ENCODE measurements at regions of chr9 and their contacts with region 1.

Region 1: GRCh38 chr9:132901856-132902831 is 23.4 kb downstream of the SPACA9 start:
- DNase-seq: peak; percentile 88
- H3K4me3 Mint-ChIP-seq: no peak overlapping the region
- H3K27ac Mint-ChIP-seq: no peak overlapping the region
- H3K4me1 Mint-ChIP-seq: no peaks in the 10 kb centered on the region
- H3K27me3 Mint-ChIP-seq: no peaks in the 10 kb centered on the region

Region 2: DNA sequence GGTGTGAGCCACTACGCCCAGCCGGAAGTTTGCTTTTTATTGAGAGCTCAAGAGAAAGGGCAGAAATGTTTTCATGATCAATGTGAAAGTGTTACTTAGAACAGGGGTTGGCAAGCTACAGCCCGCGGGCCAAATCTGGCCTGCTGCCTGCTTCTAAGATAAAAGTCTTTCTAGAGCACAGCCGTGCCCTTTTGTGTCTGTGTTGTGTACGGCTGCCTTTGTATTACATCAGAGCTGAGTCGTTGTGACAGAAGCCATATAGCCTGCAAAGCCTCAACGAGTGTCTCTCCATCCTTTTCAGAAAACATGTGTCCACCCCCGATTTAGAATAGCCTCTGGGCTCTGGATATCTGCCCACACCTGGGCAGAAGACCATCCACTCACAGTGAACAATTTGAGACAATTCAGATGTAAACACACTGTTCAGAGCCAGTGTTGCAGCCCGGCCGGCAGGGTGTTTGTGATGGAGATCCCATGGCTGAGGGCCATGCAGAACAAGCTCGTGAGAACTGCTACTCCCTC is 52.9 kb before region 1 on chr9:
- CTCF ChIA-PET with region 1: interaction called, 18 read pairs
- DNase-seq: peak; percentile 34
- H3K4me3 Mint-ChIP-seq: peak overlapping the region; percentile 38
- H3K27ac Mint-ChIP-seq: peak overlapping the region; percentile 88
- H3K4me1 Mint-ChIP-seq: peaks cover 28% of the 10 kb centered on the region
- H3K27me3 Mint-ChIP-seq: peaks cover 12% of the 10 kb centered on the region

Region 3: GRCh38 chr9:132877824-132878694 is 24.1 kb before region 1 on chr9 and contains the start of gene AK8:
- CTCF ChIA-PET with region 1: interaction called, 15 read pairs
- DNase-seq: peak; percentile 83
- H3K4me3 Mint-ChIP-seq: peak within 1 kb of the TSS; percentile 74
- H3K27ac Mint-ChIP-seq: peak within 1 kb of the TSS; percentile 86
- H3K4me1 Mint-ChIP-seq: peaks cover 24% of the 10 kb centered on the region
- H3K27me3 Mint-ChIP-seq: peaks cover 27% of the 10 kb centered on the region

Region 4: DNA sequence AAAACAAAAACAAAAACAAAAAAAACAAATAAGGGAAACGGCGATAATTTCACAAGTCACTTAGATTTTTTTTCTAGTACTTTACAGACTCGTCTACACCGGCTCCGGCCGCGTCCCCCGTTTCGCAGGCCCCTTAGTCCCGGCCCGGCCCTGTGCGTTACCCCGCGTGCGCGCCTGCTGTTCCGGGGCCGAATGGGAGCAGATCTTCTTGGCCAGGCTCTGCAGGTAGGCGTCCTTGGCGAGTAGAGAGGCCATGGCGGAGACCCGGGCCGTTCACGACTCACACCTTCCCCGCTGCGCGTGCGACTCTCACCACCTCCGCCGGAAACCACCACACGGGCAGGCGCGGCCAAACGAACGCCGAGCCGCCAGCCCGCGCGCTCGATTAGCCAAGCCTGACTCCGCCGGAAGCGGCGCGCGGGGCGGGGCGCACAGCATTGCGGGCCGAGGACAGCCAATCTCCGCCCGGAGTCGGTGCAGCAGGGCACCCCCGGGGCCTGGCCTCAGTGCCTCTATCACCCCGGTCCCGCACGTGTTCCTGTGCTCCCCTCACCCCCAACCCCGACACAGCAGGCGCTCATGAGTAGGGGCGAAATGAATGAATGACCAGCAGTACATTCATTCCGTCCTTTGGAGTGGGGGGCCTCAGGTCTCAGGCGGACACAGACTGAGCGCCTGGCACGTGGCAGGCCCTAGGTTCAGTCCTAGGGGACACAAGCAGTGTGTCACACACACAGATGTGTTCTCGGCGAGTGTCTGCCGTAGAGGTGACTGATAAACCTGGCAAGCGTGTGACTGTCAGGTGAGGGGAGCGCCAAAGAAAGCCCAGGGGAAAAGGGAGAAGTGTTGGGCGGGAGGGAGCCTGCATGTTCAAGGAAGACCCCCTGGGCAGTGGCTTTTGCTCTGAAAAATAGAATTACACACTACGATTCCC is 434.0 kb after region 1 on chr9 and contains the start of gene SURF6:
- CTCF ChIA-PET with region 1: no interaction called
- DNase-seq: peak; percentile 94
- H3K4me3 Mint-ChIP-seq: peak within 1 kb of the TSS; percentile 96
- H3K27ac Mint-ChIP-seq: peak within 1 kb of the TSS; percentile 96
- H3K4me1 Mint-ChIP-seq: peaks cover 63% of the 10 kb centered on the region
- H3K27me3 Mint-ChIP-seq: no peaks in the 10 kb centered on the region

Region 5: GRCh38 chr9:133485361-133486260 is 583.5 kb after region 1 on chr9:
- CTCF ChIA-PET with region 1: no interaction called
- DNase-seq: peak; percentile 38
- H3K4me3 Mint-ChIP-seq: no peak overlapping the region
- H3K27ac Mint-ChIP-seq: no peak overlapping the region
- H3K4me1 Mint-ChIP-seq: peaks cover 10% of the 10 kb centered on the region
- H3K27me3 Mint-ChIP-seq: peaks cover 42% of the 10 kb centered on the region

Measured in activated naive CD4-positive, alpha-beta T cell treated with anti-CD3 and anti-CD28 coated beads, Interleukin-2, amount 10 ng/mL, durations not matched to agents 7 days and 5 days (primary cell).